Heart right ventricle (tissue), 16 donors: ENCODE measurements at regions of chr15 and their contacts with region 1.

Region 1: GRCh38 chr15:67048281-67049279 is 16.8 kb upstream of the SMAD3 start:
- DNase-seq: no peak
- ATAC-seq: peak; percentile 26 to 64 (median 49)
- H3K4me3 ChIP-seq: no peak overlapping the region
- H3K27ac ChIP-seq: peak overlapping the region in 3 of 10 donors; percentile 3 to 48 (median 17)
- H3K4me1 ChIP-seq: peaks cover 0 to 52% (median 24%) of the 10 kb centered on the region in 9 donors
- H3K27me3 ChIP-seq: no peaks in the 10 kb centered on the region
- CTCF ChIP-seq: no peak

Region 2: GRCh38 chr15:67303490-67304363 is 255.1 kb after region 1 on chr15:
- intact Hi-C with region 1: loop called in 1 of 10 experiments (anchors 10 kb)
- DNase-seq: peak in 1 of 2 donors; percentile 6
- ATAC-seq: peak in 2 of 8 donors; percentile 58 to 65
- H3K4me3 ChIP-seq: no peak overlapping the region
- H3K27ac ChIP-seq: no peak overlapping the region
- H3K4me1 ChIP-seq: no peaks in the 10 kb centered on the region
- H3K27me3 ChIP-seq: no peaks in the 10 kb centered on the region
- CTCF ChIP-seq: peak; percentile 17 to 75 (median 57)